ENCODE measurements at regions of chr12 and their contacts with region 1.

Region 1: DNA sequence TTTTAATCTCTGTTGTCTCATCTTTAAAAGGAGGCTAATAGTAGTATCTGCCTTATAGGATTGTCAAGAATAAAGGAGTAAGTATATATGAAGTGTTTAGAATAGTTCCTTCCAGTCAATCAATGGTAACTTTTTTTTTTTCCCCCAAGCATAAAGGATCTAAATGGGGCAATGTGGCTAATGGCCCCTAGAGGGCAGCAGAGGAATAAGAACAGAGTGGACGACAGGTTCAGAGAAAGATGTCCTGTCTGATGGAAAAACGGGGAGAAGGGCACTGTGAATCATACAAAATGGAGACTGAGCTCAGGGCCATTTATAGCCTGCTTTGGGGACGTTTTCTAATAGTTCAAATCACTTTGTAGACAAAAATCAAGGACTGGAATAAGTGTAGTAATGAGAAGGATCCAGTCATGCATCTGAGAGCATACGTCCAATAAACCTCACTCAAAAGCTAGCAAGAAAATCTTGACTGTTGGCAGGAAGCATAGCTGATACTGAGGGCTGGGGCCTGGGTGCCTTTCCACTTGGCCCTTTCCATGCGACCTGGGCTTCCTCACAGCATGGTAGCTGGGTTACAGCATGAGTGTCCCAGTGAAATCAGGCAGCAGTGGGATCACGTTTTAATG is 51.3 kb downstream of the IFNG-AS1 start:
- DNase-seq: peak; percentile 70
- H3K4me3 ChIP-seq: no peak overlapping the region
- H3K27ac ChIP-seq: peak overlapping the region; percentile 86
- H3K4me1 ChIP-seq: peaks cover 28% of the 10 kb centered on the region
- H3K27me3 ChIP-seq: no peaks in the 10 kb centered on the region
- CTCF ChIP-seq: peak; percentile 88 to 94

Region 2: GRCh38 chr12:66885115-66885875 is 1155.3 kb before region 1 on chr12:
- CTCF ChIA-PET with region 1: no interaction called
- dilution Hi-C with region 1: no loop called
- in situ Hi-C with region 1: no loop called
- intact Hi-C with region 1: no loop called
- DNase-seq: no peak
- H3K4me3 ChIP-seq: no peak overlapping the region
- H3K27ac ChIP-seq: no peak overlapping the region
- H3K4me1 ChIP-seq: no peaks in the 10 kb centered on the region
- H3K27me3 ChIP-seq: no peaks in the 10 kb centered on the region
- CTCF ChIP-seq: no peak

Region 3: DNA sequence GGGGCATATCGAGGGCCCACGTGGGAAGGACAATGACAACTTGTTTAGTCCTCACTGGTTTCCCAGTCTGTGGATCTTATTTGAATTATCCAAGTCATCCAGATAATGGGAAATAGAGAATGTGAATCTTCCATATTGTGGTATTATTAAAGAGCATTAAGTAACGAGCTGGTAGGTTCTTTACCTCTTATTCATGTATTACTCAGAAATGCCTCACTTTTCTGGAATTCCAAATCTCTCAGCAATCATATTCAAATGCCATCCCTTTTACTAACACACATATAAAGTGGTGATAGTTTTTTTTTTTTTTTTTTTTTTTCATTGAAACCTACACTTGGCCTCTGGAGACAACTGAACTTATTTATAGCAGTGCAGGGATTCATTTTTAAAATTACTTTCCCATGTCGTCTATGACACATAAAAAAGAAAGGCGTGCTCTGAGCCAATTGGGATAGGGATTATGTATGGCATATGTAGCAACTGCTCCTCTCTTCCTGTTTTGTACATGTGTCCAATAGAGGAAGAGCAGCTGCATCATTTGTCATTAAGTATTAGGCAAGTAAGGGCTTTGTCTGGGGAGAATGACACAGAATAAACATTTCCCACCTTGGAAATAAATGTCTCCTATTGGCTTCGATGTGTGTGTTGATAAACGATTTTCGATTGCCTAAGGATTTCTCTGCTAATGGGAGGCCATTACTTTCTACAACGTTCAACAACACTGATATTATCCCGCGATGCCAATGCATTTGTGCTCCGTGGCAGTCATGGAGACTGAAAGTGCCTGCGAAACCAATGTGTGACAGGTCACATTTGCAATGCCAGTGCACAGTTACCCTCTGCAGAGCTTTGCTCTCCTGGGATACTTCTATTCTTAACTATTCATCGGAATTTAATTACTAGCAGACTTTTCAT is 129.9 kb before region 1 on chr12:
- CTCF ChIA-PET with region 1: interaction called, 10 read pairs
- dilution Hi-C with region 1: no loop called
- in situ Hi-C with region 1: no loop called
- intact Hi-C with region 1: no loop called
- DNase-seq: peak; percentile 90
- H3K4me3 ChIP-seq: no peak overlapping the region
- H3K27ac ChIP-seq: peak overlapping the region; percentile 72
- H3K4me1 ChIP-seq: peaks cover 29% of the 10 kb centered on the region
- H3K27me3 ChIP-seq: no peaks in the 10 kb centered on the region
- CTCF ChIP-seq: no peak

Region 4: DNA sequence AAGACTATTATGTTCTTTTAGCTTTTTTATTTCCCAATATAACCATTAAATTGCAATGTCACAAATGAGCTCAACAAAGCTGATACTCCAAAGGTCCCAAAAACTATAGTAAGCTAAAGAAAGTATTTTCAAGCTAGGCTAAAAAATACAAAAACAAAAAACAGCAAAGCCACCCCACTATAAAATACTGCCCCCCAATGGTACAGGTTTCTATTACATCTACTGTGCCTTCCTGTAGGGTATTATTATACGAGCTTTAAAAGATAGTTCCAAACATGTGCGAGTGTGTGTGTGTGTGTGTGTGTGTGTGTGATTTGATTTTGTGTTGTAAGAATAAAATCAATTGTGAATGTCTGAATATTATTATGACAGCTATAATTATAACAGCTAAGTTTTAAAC is 117.9 kb after region 1 on chr12:
- CTCF ChIA-PET with region 1: interaction called, 11 read pairs
- dilution Hi-C with region 1: no loop called
- in situ Hi-C with region 1: loop called (anchors 10 kb)
- intact Hi-C with region 1: loop called (anchors 1 kb)
- DNase-seq: peak; percentile 35
- H3K4me3 ChIP-seq: no peak overlapping the region
- H3K27ac ChIP-seq: no peak overlapping the region
- H3K4me1 ChIP-seq: peaks cover 9% of the 10 kb centered on the region
- H3K27me3 ChIP-seq: no peaks in the 10 kb centered on the region
- CTCF ChIP-seq: peak; percentile 49 to 75

Region 5: GRCh38 chr12:68223083-68223747 is 182.7 kb after region 1 on chr12:
- CTCF ChIA-PET with region 1: interaction called, 6 read pairs
- dilution Hi-C with region 1: no loop called
- in situ Hi-C with region 1: no loop called
- intact Hi-C with region 1: loop called (anchors 1 kb)
- DNase-seq: peak; percentile 71
- H3K4me3 ChIP-seq: no peak overlapping the region
- H3K27ac ChIP-seq: no peak overlapping the region
- H3K4me1 ChIP-seq: peaks cover 6% of the 10 kb centered on the region
- H3K27me3 ChIP-seq: peaks cover under 1% of the 10 kb centered on the region
- CTCF ChIP-seq: peak; percentile 82 to 90

Region 6: GRCh38 chr12:68310370-68310769 is 269.8 kb after region 1 on chr12:
- CTCF ChIA-PET with region 1: interaction called, 14 read pairs
- dilution Hi-C with region 1: no loop called
- in situ Hi-C with region 1: loop called in 1 of 2 experiments (anchors 25 kb)
- intact Hi-C with region 1: no loop called
- DNase-seq: peak; percentile 78
- H3K4me3 ChIP-seq: no peak overlapping the region
- H3K27ac ChIP-seq: no peak overlapping the region
- H3K4me1 ChIP-seq: peaks cover 5% of the 10 kb centered on the region
- H3K27me3 ChIP-seq: no peaks in the 10 kb centered on the region
- CTCF ChIP-seq: no peak

Region 7: DNA sequence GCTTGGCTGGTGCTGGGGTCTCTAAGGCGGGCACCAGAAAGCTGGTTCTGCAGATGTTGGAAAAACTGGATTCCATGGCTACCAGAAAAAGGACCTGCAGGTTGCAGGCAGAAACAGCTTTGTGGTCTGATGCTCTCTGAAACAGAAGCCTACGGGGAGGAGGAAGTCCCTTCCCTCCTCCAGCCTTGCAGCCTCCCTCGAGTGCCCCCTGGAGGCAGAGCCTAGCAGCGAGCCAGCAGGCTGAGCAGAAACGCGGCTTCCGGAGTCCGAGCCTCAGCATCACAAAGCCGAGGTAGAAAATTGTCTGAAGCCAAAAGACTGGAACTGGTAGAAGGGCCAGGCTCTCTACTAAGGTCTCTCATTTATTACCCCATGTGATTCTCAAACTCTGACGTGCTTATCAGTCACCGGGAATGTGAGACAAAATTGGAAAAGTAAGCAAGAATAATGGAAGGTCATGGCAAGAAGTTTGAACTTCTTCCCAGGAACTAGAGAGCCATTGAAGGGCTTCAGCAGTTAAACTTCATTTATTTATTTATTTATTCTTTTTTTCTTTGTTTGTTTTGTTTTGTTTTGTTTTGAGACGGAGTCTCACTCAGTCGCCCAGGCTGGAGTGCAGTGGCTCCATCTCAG is 1116.6 kb after region 1 on chr12:
- CTCF ChIA-PET with region 1: no interaction called
- dilution Hi-C with region 1: no loop called
- in situ Hi-C with region 1: no loop called
- intact Hi-C with region 1: loop called (anchors 5 kb)
- DNase-seq: peak; percentile 67
- H3K4me3 ChIP-seq: no peak overlapping the region
- H3K27ac ChIP-seq: no peak overlapping the region
- H3K4me1 ChIP-seq: no peaks in the 10 kb centered on the region
- H3K27me3 ChIP-seq: no peaks in the 10 kb centered on the region
- CTCF ChIP-seq: peak; percentile 97 to 99

Measured in mammary epithelial cell (primary cell).